ENCODE measurements at regions of chr5 and their contacts with region 1.

Region 1: DNA sequence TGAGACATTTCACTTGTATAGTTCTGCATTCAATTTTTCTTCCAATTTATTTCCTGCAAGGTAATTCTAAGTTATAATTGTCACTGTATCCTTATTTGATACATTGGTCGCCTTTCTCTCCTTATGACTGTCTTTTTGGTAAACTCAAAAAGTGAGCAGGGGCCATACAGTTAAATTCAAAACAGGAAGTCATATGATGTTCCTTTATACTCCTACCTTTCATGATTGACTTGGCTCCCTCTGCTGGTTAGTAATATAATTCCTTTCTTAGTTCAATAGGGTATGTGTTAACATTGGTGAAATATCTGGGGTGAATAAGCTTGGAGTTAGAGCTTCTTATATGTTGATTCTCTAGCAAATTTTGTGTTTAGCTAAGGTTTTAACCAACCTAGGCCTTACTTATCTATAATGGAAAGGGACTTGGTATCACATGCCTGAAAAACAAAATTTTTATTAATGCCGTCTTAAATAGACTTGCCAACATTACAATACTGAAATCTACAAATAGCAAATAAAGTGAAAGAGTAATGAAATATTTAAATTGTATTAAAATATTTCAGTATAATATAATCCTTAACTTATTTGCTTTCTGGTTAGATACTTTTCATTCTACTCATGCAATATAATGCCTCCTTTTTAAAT is 6.0 kb upstream of the NIPBL start:
- DNase-seq: no peak
- ATAC-seq: peak; percentile 72
- H3K4me3 ChIP-seq: no peak overlapping the region
- H3K27ac ChIP-seq: no peak overlapping the region
- H3K4me1 ChIP-seq: peaks cover 0 to 3% of the 10 kb centered on the region in 2 donors
- H3K27me3 ChIP-seq: no peaks in the 10 kb centered on the region

Region 2: GRCh38 chr5:36734422-36734821 is 136.1 kb before region 1 on chr5:
- intact Hi-C with region 1: loop called in 1 of 2 experiments (anchors 5 kb)
- DNase-seq: no peak
- ATAC-seq: no peak
- H3K4me3 ChIP-seq: no peak overlapping the region
- H3K27ac ChIP-seq: no peak overlapping the region
- H3K4me1 ChIP-seq: no peaks in the 10 kb centered on the region
- H3K27me3 ChIP-seq: no peaks in the 10 kb centered on the region

Region 3: GRCh38 chr5:36739751-36740221 is 130.7 kb before region 1 on chr5:
- intact Hi-C with region 1: loop called (anchors 5 kb)
- DNase-seq: peak in 1 of 2 donors; percentile 79
- ATAC-seq: peak; percentile 60
- H3K4me3 ChIP-seq: no peak overlapping the region
- H3K27ac ChIP-seq: no peak overlapping the region
- H3K4me1 ChIP-seq: peaks cover 0 to 2% of the 10 kb centered on the region in 2 donors
- H3K27me3 ChIP-seq: no peaks in the 10 kb centered on the region

Measured in aorta (tissue), 5 donors.